ENCODE measurements at regions of chr3 and their contacts with region 1.

Region 1: GRCh38 chr3:184543843-184544512 is 17.6 kb upstream of the EPHB3 start:
- DNase-seq: peak; percentile 87
- H3K4me3 ChIP-seq: no peak overlapping the region
- H3K27ac ChIP-seq: no peak overlapping the region
- H3K4me1 ChIP-seq: no peaks in the 10 kb centered on the region
- H3K27me3 ChIP-seq: peaks cover 4% of the 10 kb centered on the region
- CTCF ChIP-seq: peak; percentile 91

Region 2: DNA sequence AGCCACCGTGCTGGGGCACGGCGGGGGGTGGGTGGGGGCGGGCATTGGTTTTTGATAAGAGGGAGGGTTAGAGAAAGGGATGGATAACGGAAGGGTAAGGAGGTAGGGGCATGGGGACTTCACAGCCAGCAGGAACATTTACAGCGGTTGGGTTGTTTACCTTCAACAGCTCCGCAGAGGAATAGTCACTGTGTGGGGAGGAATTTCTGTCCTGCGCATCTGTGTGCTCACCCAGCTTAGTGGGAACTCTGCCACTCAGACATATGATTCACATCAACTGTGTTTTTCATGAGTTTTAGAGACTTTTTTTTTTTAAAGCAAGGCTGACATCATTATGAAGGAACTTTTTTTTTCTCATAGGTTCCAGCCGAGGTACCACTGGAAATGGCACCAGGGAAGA is 144.6 kb before region 1 on chr3:
- CTCF ChIA-PET with region 1: interaction called, 10 read pairs
- POLR2A ChIA-PET with region 1: no interaction called
- intact Hi-C with region 1: no loop called
- DNase-seq: no peak
- H3K4me3 ChIP-seq: no peak overlapping the region
- H3K27ac ChIP-seq: no peak overlapping the region
- H3K4me1 ChIP-seq: no peaks in the 10 kb centered on the region
- H3K27me3 ChIP-seq: peaks cover 15% of the 10 kb centered on the region
- CTCF ChIP-seq: no peak

Region 3: GRCh38 chr3:184417619-184418327 is 126.2 kb before region 1 on chr3:
- CTCF ChIA-PET with region 1: no interaction called
- POLR2A ChIA-PET with region 1: no interaction called
- intact Hi-C with region 1: loop called (anchors 5 kb)
- DNase-seq: peak; percentile 78
- H3K4me3 ChIP-seq: no peak overlapping the region
- H3K27ac ChIP-seq: no peak overlapping the region
- H3K4me1 ChIP-seq: peaks cover 10% of the 10 kb centered on the region
- H3K27me3 ChIP-seq: no peaks in the 10 kb centered on the region
- CTCF ChIP-seq: peak; percentile 91

Region 4: GRCh38 chr3:184525337-184526087 is 18.5 kb before region 1 on chr3:
- CTCF ChIA-PET with region 1: interaction called, 10 read pairs
- POLR2A ChIA-PET with region 1: no interaction called
- intact Hi-C with region 1: no loop called
- DNase-seq: no peak
- H3K4me3 ChIP-seq: peak overlapping the region; percentile 47
- H3K27ac ChIP-seq: no peak overlapping the region
- H3K4me1 ChIP-seq: peaks cover 10% of the 10 kb centered on the region
- H3K27me3 ChIP-seq: peaks cover 81% of the 10 kb centered on the region
- CTCF ChIP-seq: no peak

Region 5: DNA sequence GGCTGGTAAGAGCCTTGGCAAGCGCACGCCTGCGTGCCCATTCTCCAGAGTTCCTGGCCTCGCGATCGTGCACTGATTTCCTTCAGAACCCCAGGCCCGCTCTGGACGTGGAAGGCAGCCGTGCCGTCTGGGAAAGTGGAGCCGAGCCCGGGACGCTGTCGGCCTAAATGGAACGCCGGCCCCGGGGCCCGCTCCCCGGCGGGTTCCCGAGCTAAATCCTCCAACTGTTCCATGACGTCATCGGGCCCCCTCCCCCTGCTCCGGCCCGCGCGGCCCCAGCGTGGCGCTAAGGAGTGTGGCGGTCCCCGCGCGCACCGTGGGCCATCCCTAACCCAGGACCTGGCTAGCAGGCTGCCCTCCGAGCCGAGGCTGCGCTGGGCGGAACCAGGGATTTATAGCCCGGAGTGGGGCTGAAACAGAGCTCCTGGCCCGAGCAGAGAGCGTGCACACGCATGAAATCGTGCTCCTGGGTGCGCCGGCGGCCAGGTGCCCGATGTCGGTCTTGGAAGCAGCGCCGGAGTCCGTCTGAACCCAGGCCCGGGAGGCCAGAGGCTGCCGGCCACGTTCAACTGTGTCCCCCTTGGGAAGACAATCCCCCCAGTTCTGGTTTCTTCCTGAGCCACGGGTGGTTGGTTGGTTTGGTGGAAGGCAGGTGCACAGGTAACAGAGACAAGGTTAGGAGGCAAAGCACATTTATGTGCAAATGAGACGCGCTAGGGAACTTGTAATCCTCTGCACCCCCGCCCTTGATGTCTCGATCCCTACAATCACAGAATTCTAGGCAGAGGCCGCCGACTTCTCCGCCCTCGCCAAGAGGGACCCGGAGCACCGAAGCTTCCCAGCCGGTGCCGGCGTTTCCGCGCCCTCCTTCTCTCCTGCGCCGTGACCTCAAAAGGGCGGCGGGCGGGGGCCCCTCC is 1649.8 kb after region 1 on chr3:
- CTCF ChIA-PET with region 1: no interaction called
- POLR2A ChIA-PET with region 1: no interaction called
- intact Hi-C with region 1: no loop called
- DNase-seq: no peak
- H3K4me3 ChIP-seq: no peak overlapping the region
- H3K27ac ChIP-seq: no peak overlapping the region
- H3K4me1 ChIP-seq: no peaks in the 10 kb centered on the region
- H3K27me3 ChIP-seq: no peaks in the 10 kb centered on the region
- CTCF ChIP-seq: no peak